Left cardiac atrium (tissue), 4 donors: ENCODE measurements at regions of chr16 and their contacts with region 1.

Region 1: DNA sequence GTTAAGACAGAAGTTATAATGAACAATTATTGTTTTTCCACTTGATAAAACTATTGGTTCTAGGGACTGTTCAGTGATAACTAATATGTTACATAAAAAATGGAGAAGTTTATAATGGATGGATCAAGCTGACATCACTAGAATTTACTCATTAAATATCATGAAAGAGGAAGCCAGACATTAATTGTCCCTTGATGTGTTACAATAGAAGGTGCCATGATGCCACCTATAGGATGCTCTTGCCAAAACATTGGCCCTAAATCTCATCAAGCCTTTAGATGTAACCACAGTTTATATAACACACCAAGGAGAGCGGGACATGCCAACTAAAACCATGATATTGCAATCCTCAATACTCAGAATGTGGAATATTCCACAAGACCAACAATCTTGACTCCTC is 147.9 kb upstream of the MON1B start:
- DNase-seq: no peak
- ATAC-seq: no peak

Region 2: DNA sequence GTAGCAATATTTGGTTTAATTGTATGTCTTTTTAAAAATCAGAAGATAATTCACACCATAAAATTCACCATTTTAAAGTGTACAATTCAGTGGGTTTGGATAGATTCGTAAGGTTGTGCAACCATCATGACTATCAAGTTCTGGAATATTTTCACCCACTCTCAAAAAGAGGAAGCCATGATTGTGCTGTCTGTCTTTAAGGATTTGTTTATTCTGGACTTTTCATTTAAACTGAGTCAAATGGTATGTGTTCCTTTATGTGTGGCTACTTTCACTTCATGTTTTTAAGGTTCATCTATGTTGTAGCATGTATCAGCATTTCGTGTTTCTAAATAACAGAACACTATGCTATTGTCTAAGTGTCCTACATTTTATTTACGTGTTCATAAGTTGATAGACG is 1248.7 kb before region 1 on chr16:
- intact Hi-C with region 1: loop called in 1 of 2 experiments (anchors 10 kb)
- DNase-seq: no peak
- ATAC-seq: no peak